Activated CD8-positive, alpha-beta memory T cell treated with anti-CD3 and anti-CD28 coated beads, Interleukin-2, amount 10 ng/mL, durations not matched to agents 7 days and 5 days (primary cell): ENCODE measurements at regions of chr22 and their contacts with region 1.

Region 1: DNA sequence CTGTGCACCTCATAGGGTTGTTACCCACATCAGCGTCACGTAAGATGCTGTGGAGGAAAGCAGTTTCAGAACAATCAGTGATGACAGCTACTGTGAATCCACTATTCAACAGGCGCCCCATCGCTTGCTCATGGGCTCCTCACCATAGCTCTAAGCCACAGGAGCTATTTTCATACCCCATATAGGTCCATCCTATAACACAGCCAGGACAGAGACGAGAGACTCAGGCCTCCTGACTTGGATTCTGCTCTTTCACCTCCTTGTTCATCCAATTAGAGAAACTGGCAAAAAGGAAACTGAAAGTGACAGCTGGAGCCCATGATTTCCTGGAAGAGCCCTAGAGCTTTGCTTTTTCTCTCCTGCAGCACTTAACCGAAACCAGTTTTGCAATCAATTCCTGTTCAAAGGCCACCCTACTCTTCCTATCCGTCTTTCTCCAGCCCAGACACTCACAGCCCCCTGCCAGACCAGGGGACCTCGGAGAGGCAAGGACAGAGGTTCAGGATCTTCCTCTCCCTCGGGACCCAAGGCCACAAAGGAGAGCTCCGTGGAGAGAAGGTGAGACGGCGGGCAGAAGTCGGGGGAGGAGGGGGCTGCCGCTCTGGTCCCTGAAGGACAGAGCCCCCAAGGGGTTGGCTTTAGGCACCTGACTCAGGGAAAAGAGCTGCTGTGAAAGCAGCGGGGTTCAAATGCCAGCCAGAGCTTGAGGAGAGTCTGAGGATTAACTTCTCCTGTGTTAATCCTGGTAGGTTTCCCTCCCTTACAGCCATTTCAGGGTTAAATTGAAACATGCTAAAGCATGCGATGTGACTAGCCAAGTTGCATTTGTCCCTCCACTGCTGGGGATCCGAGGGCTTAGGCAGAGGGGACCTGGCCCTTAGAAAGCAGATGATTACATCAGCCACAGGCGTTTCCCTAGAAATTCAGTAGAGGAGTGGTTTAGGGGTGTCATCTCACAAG is at the start of gene APOL6:
- DNase-seq: peak; percentile 85
- ATAC-seq: peak; percentile 80
- H3K4me3 Mint-ChIP-seq: peak within 1 kb of the TSS; percentile 100
- H3K27ac Mint-ChIP-seq: peak within 1 kb of the TSS; percentile 100
- H3K4me1 Mint-ChIP-seq: peaks cover 36% of the 10 kb centered on the region
- H3K27me3 Mint-ChIP-seq: no peaks in the 10 kb centered on the region
- total RNA-seq, gene APOL6: 59.9 to 65.2 TPM

Region 2: GRCh38 chr22:35627264-35628041 is 20.9 kb before region 1 on chr22:
- CTCF ChIA-PET with region 1: interaction called, 32 read pairs
- DNase-seq: peak; percentile 80
- ATAC-seq: peak; percentile 67
- H3K4me3 Mint-ChIP-seq: peak overlapping the region; percentile 76
- H3K27ac Mint-ChIP-seq: peak overlapping the region; percentile 61
- H3K4me1 Mint-ChIP-seq: peaks cover 28% of the 10 kb centered on the region
- H3K27me3 Mint-ChIP-seq: peaks cover 17% of the 10 kb centered on the region

Region 3: GRCh38 chr22:35660291-35661127 is 12.2 kb after region 1 on chr22:
- CTCF ChIA-PET with region 1: interaction called, 14 read pairs
- DNase-seq: peak; percentile 69
- ATAC-seq: peak; percentile 79
- H3K4me3 Mint-ChIP-seq: no peak overlapping the region
- H3K27ac Mint-ChIP-seq: peak overlapping the region; percentile 83
- H3K4me1 Mint-ChIP-seq: peaks cover 61% of the 10 kb centered on the region
- H3K27me3 Mint-ChIP-seq: no peaks in the 10 kb centered on the region